Activated CD4-positive, alpha-beta memory T cell treated with anti-CD3 and anti-CD28 coated beads for 36 hours (primary cell): ENCODE measurements at regions of chr9 and their contacts with region 1.

Region 1: DNA sequence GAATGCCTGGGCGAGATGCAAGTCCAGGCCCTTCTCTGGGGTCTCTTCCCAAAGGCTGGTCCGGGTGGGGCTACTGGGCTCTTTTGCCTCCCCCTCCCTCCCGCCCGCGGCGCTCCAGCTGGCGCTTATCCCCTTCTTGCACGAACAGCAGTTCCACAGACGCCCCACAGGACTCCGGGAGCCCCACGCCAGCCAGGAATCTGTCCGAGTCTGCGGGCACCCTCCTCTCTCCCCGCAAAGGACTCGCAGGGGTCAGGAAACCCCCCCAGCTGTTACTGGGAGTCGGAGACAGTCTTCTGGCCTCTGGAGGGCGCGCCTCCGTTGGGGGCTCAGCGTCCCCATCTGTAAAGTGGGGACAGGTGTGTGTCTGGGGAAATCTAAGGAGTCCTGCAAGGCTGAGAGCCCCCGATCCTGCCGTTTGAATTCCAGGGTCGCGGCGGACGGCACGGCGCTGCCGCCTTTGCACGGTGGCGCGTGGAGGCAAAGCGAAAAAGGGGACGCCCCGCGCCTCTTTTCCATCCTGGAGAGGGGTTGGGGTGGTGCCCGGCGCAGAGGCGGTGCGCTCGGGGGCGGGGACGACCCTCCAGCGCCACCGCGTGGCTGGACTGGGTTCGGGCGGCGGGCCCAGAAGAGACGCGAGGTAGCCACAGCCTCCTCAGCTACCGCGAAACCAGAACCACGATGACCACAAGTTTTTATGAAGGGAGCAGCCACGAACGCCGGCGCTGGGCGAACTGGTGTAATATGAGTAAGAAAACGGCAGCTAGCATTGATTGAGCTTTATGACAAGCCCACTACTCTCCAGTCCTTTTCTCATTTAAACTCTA is 2.9 kb upstream of the CCIN start:
- DNase-seq: peak; percentile 88
- H3K4me3 Mint-ChIP-seq: peak overlapping the region; percentile 75
- H3K27ac Mint-ChIP-seq: peak overlapping the region; percentile 13
- H3K4me1 Mint-ChIP-seq: peaks cover 6% of the 10 kb centered on the region
- H3K27me3 Mint-ChIP-seq: no peaks in the 10 kb centered on the region

Region 2: GRCh38 chr9:35954942-35955546 is 211.3 kb before region 1 on chr9:
- CTCF ChIA-PET with region 1: interaction called, 6 read pairs
- POLR2A ChIA-PET with region 1: no interaction called
- intact Hi-C with region 1: loop called (anchors 2 kb)
- DNase-seq: peak; percentile 59
- H3K4me3 Mint-ChIP-seq: no peak overlapping the region
- H3K27ac Mint-ChIP-seq: no peak overlapping the region
- H3K4me1 Mint-ChIP-seq: peaks cover 6% of the 10 kb centered on the region
- H3K27me3 Mint-ChIP-seq: peaks cover 2% of the 10 kb centered on the region

Region 3: GRCh38 chr9:35967042-35967441 is 199.3 kb before region 1 on chr9:
- CTCF ChIA-PET with region 1: no interaction called
- POLR2A ChIA-PET with region 1: no interaction called
- intact Hi-C with region 1: no loop called
- DNase-seq: no peak
- H3K4me3 Mint-ChIP-seq: no peak overlapping the region
- H3K27ac Mint-ChIP-seq: no peak overlapping the region
- H3K4me1 Mint-ChIP-seq: no peaks in the 10 kb centered on the region
- H3K27me3 Mint-ChIP-seq: peaks cover 11% of the 10 kb centered on the region

Region 4: DNA sequence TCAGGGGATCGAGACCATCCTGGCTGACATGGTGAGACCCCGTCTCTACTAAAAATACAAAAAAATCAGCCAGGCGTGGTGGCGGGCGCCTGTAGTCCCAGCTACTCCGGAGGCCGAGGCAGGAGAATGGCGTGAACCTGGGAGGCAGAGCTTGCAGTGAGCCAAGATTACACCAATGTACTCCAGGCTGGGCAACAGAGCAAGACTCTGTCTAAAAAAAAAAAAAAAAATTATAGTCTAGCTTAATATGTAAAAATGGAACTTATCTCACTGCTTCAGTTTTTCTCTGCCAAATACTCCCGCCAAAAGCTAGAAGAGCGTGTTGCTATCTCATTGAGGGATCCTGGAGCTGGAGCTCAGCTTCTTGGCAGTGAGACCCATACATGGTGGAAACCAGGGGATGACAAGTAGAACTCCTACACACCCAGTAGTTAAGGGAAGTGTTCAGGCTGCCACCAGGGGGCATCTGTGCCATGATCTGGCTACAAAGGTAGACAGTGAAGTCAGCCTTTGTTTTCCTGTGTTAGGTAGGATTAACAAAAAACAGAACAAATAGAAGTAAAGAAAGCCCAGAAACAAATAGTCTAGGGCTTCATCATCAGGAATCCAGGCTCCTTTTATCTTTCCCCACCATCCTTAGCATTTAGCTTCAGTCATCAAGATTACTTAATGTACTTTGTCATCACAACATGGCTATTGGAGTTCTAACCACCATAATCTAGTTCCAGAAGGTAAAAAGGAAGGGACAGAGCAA is 63.4 kb before region 1 on chr9:
- CTCF ChIA-PET with region 1: interaction called, 341 read pairs
- POLR2A ChIA-PET with region 1: interaction called, 6 read pairs
- intact Hi-C with region 1: loop called (anchors 1 kb)
- DNase-seq: peak; percentile 92
- H3K4me3 Mint-ChIP-seq: no peak overlapping the region
- H3K27ac Mint-ChIP-seq: no peak overlapping the region
- H3K4me1 Mint-ChIP-seq: peaks cover 8% of the 10 kb centered on the region
- H3K27me3 Mint-ChIP-seq: no peaks in the 10 kb centered on the region

Region 5: DNA sequence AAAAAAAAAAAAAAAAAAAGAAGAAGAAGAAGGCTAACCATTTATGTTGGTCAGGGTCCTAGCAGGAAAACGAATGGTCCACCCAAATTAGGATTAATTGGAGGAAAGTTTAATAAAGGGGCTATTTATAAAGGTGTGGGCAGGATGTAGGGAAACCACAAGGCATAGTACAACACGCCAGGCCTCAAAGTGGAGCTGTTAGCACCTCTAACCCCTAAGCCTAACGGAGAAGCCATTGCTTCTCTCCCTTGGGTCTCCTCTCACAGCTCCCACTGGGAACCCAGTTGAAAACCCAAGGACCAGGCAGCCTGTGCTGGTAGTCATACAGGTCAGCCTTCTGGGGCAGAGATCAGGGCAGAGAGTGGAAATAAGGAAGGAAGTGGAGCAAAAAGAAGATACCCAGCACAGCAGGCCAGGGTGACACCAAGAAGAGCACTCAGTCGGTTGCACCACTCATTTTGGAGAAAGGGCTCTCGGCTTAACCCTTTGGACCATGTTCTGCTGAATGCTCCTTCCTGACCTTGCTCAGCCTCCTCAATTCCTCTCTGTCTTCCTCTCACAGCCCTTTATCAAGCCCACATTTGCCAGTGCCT is 38.6 kb before region 1 on chr9:
- CTCF ChIA-PET with region 1: interaction called, 12 read pairs
- POLR2A ChIA-PET with region 1: no interaction called
- intact Hi-C with region 1: no loop called
- DNase-seq: no peak
- H3K4me3 Mint-ChIP-seq: no peak overlapping the region
- H3K27ac Mint-ChIP-seq: no peak overlapping the region
- H3K4me1 Mint-ChIP-seq: peaks cover 28% of the 10 kb centered on the region
- H3K27me3 Mint-ChIP-seq: no peaks in the 10 kb centered on the region

Region 6: GRCh38 chr9:36142510-36143244 is 23.6 kb before region 1 on chr9:
- CTCF ChIA-PET with region 1: interaction called, 34 read pairs
- POLR2A ChIA-PET with region 1: no interaction called
- intact Hi-C with region 1: loop called (anchors 1 kb)
- DNase-seq: no peak
- H3K4me3 Mint-ChIP-seq: peak overlapping the region; percentile 77
- H3K27ac Mint-ChIP-seq: peak overlapping the region; percentile 93
- H3K4me1 Mint-ChIP-seq: peaks cover 93% of the 10 kb centered on the region
- H3K27me3 Mint-ChIP-seq: no peaks in the 10 kb centered on the region

Region 7: DNA sequence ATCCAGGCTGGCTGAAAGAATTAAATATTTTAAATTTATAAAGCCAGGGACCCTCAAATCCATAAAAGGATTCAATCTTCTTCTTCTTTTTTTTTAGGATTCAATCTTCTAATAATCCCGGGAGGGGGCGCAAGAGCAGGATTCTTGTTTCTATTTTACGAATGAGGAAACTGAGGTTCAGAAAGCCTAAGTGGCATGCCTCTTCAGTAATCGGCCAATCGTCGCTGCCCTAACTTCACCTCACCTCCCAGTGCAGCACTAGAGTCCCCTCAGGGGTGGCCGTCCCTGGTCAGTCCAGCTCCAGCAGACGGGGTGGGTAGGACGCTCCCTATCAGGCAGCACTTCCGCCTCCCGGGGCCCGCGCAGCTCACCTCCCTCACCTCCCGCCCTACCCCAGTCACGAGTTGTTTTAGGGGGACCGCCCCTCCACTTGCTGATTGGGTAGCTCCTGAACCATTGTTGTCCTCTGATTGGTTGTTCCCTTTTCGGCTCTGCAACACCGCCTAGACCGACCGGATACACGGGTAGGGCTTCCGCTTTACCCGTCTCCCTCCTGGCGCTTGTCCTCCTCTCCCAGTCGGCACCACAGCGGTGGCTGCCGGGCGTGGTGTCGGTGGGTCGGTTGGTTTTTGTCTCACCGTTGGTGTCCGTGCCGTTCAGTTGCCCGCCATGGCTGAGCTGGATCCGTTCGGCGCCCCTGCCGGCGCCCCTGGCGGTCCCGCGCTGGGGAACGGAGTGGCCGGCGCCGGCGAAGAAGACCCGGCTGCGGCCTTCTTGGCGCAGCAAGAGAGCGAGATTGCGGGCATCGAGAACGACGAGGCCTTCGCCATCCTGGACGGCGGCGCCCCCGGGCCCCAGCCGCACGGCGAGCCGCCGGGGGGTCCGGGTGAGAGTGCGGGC is 24.3 kb after region 1 on chr9 and contains the start of gene CLTA:
- CTCF ChIA-PET with region 1: interaction called, 11 read pairs
- POLR2A ChIA-PET with region 1: interaction called, 6 read pairs
- intact Hi-C with region 1: no loop called
- DNase-seq: peak; percentile 98
- H3K4me3 Mint-ChIP-seq: peak within 1 kb of the TSS; percentile 94
- H3K27ac Mint-ChIP-seq: peak within 1 kb of the TSS; percentile 86
- H3K4me1 Mint-ChIP-seq: peaks cover 45% of the 10 kb centered on the region
- H3K27me3 Mint-ChIP-seq: no peaks in the 10 kb centered on the region
- total RNA-seq, gene CLTA: 139 to 144 TPM

Region 8: GRCh38 chr9:36258208-36258988 is 92.1 kb after region 1 on chr9 and contains the start of gene GNE:
- CTCF ChIA-PET with region 1: no interaction called
- POLR2A ChIA-PET with region 1: no interaction called
- intact Hi-C with region 1: no loop called
- DNase-seq: peak; percentile 98
- H3K4me3 Mint-ChIP-seq: peak within 1 kb of the TSS; percentile 96
- H3K27ac Mint-ChIP-seq: peak within 1 kb of the TSS; percentile 80
- H3K4me1 Mint-ChIP-seq: peaks cover 14% of the 10 kb centered on the region
- H3K27me3 Mint-ChIP-seq: no peaks in the 10 kb centered on the region
- total RNA-seq, gene GNE: 19.2 to 20.5 TPM